A549 (cell line): ENCODE measurements at regions of chr19 and their contacts with region 1.

Region 1: GRCh38 chr19:39445265-39446111 is at the start of gene SUPT5H:
- DNase-seq: peak; percentile 100
- ATAC-seq: peak; percentile 94 to 97
- H3K4me3 ChIP-seq: peak within 1 kb of the TSS; percentile 80
- H3K27ac ChIP-seq: peak within 1 kb of the TSS; percentile 86 to 90
- H3K4me1 ChIP-seq: peaks cover 28% of the 10 kb centered on the region
- CTCF ChIP-seq: no peak
- EP300 ChIP-seq: no peak
- POLR2A ChIP-seq: peak; percentile 94
- RAD21 ChIP-seq: no peak
- polyA plus RNA-seq, gene SUPT5H: 133 and 186 TPM in 2 replicates

Region 2: GRCh38 chr19:39469036-39469435 is 23.5 kb after region 1 on chr19:
- CTCF ChIA-PET with region 1: interaction called, 193 read pairs
- POLR2A ChIA-PET with region 1: interaction called, 6 read pairs
- DNase-seq: no peak
- ATAC-seq: peak in 1 of 2 experiments; percentile 26; a peak in 3 of 6 replicates
- H3K4me3 ChIP-seq: no peak overlapping the region
- H3K27ac ChIP-seq: peak overlapping the region; percentile 27 to 41; a peak in 3 of 6 replicates
- H3K4me1 ChIP-seq: peaks cover 26% of the 10 kb centered on the region
- CTCF ChIP-seq: no peak
- EP300 ChIP-seq: no peak
- POLR2A ChIP-seq: no peak
- RAD21 ChIP-seq: no peak

Region 3: DNA sequence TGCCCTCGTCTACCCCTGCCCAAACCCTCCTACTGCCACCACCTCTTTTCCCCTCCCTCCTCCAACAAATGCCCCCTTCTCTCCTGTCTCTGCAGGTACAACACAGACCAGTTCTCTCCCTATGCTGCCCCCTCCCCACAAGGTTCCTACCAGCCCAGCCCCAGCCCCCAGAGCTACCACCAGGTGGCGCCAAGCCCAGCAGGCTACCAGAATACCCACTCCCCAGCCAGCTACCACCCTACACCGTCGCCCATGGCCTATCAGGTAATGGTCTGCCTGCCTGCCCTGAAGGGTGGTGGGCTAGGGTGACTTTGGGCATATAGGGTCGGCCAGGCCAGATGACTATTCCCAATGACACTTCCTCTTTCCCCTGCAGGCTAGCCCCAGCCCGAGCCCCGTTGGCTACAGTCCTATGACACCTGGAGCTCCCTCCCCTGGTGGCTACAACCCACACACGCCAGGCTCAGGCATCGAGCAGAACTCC is 28.7 kb after region 1 on chr19:
- CTCF ChIA-PET with region 1: interaction called, 193 read pairs
- POLR2A ChIA-PET with region 1: interaction called, 4 read pairs
- DNase-seq: peak; percentile 64 to 89
- ATAC-seq: peak; percentile 58 to 87; a peak in 5 of 6 replicates
- H3K4me3 ChIP-seq: no peak overlapping the region
- H3K27ac ChIP-seq: no peak overlapping the region
- H3K4me1 ChIP-seq: peaks cover 13% of the 10 kb centered on the region
- CTCF ChIP-seq: peak; percentile 97
- EP300 ChIP-seq: no peak
- POLR2A ChIP-seq: no peak
- RAD21 ChIP-seq: peak; percentile 61 to 69; a peak in 4 of 5 replicates

Region 4: GRCh38 chr19:39480337-39481228 is 35.1 kb after region 1 on chr19 and contains the start of gene TIMM50:
- CTCF ChIA-PET with region 1: interaction called, 193 read pairs
- POLR2A ChIA-PET with region 1: interaction called, 15 read pairs
- DNase-seq: peak; percentile 97
- ATAC-seq: peak; percentile 91 to 96
- H3K4me3 ChIP-seq: peak within 1 kb of the TSS; percentile 70
- H3K27ac ChIP-seq: peak within 1 kb of the TSS; percentile 86 to 92
- H3K4me1 ChIP-seq: peaks cover 15% of the 10 kb centered on the region
- CTCF ChIP-seq: no peak
- EP300 ChIP-seq: no peak
- POLR2A ChIP-seq: peak; percentile 93
- RAD21 ChIP-seq: no peak
- polyA plus RNA-seq, gene TIMM50: 234 and 246 TPM in 2 replicates

Region 5: DNA sequence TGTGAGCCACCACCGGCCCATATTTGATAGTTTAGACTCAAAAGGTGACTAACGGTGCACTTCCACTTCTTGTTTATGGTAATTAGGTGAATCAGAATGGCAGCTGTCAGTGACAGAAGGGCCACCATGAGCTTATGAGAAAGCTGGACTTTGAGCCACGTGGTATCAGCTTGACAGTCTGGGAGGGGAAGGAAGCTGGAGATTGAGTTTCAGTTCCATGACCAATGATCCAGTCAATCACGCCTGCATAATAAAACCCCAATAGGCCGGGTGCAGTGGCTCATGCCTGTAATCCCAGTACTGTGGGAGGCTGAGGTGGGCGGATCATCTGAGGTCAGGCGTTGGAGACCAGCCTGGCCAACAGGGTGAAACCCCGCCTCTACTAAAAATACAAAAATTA is 79.0 kb after region 1 on chr19:
- CTCF ChIA-PET with region 1: interaction called, 279 read pairs
- POLR2A ChIA-PET with region 1: interaction called, 4 read pairs
- DNase-seq: no peak
- ATAC-seq: no peak; a peak in 1 of 6 replicates
- H3K4me3 ChIP-seq: no peak overlapping the region
- H3K27ac ChIP-seq: no peak overlapping the region
- H3K4me1 ChIP-seq: peaks cover 5% of the 10 kb centered on the region; the same call in 2 of the 3 replicates
- CTCF ChIP-seq: no peak
- EP300 ChIP-seq: no peak
- POLR2A ChIP-seq: no peak
- RAD21 ChIP-seq: no peak

Region 6: DNA sequence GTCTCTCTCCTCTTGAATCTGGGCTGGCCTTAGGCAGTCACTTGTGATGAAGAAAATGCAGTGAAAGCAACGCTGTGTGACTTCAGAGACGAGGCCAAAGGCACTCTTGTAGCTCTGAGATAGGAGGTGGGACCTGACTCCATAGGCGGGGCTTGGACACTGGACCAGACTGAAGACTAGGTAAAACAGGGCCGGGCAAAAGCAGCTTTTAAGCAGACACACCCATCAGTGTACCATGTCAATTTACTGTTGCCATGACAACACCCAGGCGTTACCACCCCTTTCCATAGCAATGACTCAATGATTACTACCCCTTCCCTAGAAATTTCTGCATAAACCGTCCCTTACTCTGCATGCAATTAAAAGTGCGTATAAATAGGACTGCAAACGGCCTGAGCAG is 101.1 kb after region 1 on chr19:
- CTCF ChIA-PET with region 1: interaction called, 105 read pairs
- POLR2A ChIA-PET with region 1: interaction called, 5 read pairs
- DNase-seq: peak in 1 of 2 experiments; percentile 45
- ATAC-seq: peak in 1 of 2 experiments; percentile 17; a peak in 2 of 6 replicates
- H3K4me3 ChIP-seq: no peak overlapping the region
- H3K27ac ChIP-seq: no peak overlapping the region
- H3K4me1 ChIP-seq: no peaks in the 10 kb centered on the region
- CTCF ChIP-seq: no peak
- EP300 ChIP-seq: no peak
- POLR2A ChIP-seq: no peak
- RAD21 ChIP-seq: no peak

Region 7: DNA sequence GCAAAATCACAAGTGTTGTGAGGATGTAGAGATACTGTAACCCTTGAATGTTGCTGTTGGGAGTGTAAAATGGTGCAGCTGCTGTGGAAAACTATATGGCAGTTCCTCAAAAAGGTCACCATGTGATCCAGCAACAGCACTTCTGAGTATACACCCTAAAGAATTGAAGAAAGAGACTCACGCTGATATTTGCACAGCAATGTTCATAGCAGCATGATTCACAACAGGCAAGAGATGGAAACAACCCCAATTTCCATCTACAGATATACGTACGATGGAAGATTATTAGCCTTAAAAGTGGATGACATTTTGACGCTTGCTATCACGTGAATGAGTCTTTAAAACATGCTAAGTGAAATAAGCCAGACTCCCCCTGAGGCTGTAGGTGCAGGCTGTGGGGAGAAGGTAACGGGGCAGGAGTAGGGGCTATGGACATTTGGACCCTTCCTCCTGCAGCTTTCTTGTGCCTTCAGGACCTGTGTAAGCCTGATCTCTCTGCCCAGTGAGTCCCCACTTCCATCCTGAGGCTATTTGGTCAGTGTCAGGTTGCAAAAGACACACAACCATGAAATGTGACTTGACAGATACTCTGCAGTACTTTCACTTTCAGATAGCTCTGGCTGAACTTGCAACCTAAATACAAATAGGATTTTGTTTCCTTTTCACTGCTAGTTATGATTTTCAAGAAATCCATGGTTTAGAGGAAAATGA is 112.1 kb after region 1 on chr19:
- CTCF ChIA-PET with region 1: interaction called, 13 read pairs
- POLR2A ChIA-PET with region 1: no interaction called
- DNase-seq: no peak
- ATAC-seq: peak in 1 of 2 experiments; percentile 52; a peak in 3 of 6 replicates
- H3K4me3 ChIP-seq: no peak overlapping the region
- H3K27ac ChIP-seq: no peak overlapping the region
- H3K4me1 ChIP-seq: no peaks in the 10 kb centered on the region
- CTCF ChIP-seq: no peak
- EP300 ChIP-seq: no peak
- POLR2A ChIP-seq: no peak
- RAD21 ChIP-seq: no peak